Cardiac septum (tissue), 1 donor: ENCODE measurements at regions of chr2 and their contacts with region 1.

Region 1: DNA sequence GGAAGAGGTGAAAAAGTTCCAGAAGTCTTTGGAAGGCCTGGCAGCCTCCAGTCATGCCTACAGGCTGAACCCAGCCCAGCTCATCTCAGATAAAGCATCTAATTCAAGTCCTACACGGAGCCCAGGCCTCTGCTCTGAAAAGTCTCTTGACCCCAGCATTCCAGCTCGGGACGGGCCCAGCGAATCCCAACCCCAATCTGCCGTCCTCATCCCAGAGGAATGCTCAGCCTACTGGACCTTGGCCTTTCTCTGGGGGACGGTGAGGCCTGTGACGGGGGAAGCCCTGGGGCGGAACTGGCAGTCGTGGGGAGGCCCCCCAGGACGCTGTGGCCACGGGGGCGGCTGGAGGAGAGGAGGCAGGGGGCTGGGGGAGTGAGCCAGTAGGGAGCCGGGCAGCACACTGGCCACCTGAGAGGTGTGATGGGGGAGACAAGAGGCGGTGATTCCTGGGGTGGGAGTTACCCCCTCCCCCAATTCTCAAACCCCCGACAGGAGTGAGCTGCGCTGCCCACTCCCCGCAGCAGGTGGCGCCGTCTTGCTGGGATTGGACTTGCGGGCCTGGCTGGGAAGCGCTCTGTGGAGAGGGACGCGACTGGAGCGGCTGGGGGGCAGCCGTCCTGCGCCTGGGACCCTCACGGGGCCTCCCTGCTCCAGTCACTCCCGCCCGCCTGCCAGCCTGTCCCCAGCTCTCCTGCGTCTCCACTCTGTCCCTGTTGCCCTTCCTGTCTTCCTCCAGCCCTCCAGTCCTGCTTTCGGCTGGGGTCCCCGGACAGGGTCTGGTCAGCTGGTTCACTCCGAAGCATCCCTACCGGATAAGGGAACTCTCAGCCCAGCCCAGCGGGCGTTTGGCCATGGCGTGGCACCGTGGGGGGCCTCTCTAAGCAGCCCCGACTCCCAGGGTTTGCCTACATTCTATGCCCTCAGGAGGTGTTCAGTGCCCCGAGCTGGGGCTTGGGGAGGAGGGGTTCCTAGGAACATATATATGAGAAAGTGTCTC is 182.6 kb upstream of the HAAO start:
- DNase-seq: peak; percentile 90

Region 2: GRCh38 chr2:42587526-42588117 is 387.4 kb before region 1 on chr2:
- intact Hi-C with region 1: no loop called
- DNase-seq: no peak

Region 3: GRCh38 chr2:42770288-42771131 is 204.5 kb before region 1 on chr2:
- intact Hi-C with region 1: no loop called
- DNase-seq: peak; percentile 63

Region 4: GRCh38 chr2:43024515-43025011 is 49.5 kb after region 1 on chr2:
- intact Hi-C with region 1: loop called (anchors 5 kb)
- DNase-seq: no peak

Region 5: DNA sequence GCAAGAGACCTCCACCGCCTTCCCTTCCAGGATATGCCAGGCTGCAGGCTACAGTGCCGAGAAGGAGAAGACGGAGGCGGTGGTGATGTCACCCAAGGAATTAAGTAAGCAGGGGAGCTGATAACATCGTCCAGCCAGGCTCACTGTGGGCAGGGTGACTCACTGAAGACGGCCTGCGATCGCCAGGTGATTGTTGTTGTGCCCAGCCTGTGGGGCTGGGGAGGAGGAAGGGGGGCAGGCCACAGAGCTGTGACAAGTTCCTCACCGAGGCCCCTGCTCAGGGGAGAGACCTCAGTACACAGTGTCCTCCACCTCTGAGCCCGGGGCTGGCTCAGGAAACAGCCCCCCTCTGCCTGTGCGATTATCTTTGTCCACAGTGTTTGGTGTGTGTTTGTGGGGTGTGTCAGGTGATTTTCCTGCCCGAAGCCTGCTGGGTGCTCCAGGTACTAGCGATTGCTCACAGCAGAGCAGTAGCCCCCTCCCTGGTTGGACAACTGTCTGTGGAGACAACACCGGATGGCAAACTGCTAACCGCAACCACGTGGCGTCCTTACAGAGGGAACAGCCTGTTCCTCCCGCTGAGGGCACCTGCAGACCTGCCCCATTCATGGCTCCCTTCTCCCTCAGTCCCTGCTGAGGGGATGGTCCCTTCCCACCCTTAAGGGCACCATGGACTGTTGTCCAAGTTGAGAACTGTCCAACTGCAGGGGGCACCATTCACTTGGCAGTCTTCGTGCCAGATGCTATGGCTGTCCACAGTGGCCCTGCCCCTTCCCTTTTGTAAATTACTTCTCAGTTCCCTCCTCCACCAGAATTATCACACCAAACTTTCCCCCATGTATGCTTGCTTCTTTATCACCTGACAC is 156.2 kb after region 1 on chr2:
- intact Hi-C with region 1: loop called (anchors 5 kb)
- DNase-seq: peak; percentile 91